ENCODE measurements at regions of chr12 and their contacts with region 1.

Region 1: DNA sequence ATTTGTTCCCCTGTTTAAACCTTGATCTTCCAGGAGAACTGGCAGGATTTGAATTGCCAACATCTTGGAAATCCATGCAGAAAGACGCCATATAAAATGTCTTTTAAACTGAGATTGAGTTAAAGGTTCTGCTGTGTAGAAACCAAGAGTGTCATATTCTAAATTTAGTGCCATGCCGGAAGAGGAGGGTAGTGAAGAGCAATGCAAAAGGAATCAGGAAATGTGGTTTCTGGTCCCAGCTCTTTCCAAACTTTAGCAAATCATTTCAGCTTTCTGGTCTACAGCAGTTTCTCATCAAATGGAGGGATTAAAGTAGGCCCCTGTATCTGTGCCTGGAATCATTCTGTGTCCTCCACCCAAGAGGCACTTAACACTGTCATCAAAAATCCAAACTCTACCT is 85.7 kb downstream of the BTG1 start:
- DNase-seq: no peak
- ATAC-seq: no peak
- H3K4me3 ChIP-seq: no peak overlapping the region
- H3K4me3 Mint-ChIP-seq: peak overlapping the region in 8 of 10 donors; percentile 6 to 79 (median 46)
- H3K27ac ChIP-seq: no peak overlapping the region
- H3K27ac Mint-ChIP-seq: peak overlapping the region in 8 of 9 donors; percentile 19 to 98 (median 93)
- H3K4me1 ChIP-seq: peaks cover 10 to 53% of the 10 kb centered on the region in 2 donors
- H3K4me1 Mint-ChIP-seq: peaks cover 39 to 99% (median 94%) of the 10 kb centered on the region in 7 donors
- H3K27me3 ChIP-seq: no peaks in the 10 kb centered on the region
- H3K27me3 Mint-ChIP-seq: no peaks in the 10 kb centered on the region

Region 2: GRCh38 chr12:91991399-91992187 is 68.4 kb before region 1 on chr12:
- CTCF ChIA-PET with region 1: no interaction called
- POLR2A ChIA-PET with region 1: interaction called, 3 read pairs
- intact Hi-C with region 1: loop called in 1 of 2 experiments (anchors 2 kb)
- DNase-seq: peak in 5 of 9 donors; percentile 22 to 64 (median 48)
- ATAC-seq: peak; percentile 83
- H3K4me3 ChIP-seq: no peak overlapping the region
- H3K4me3 Mint-ChIP-seq: peak overlapping the region in 5 of 10 donors; percentile 18 to 50 (median 32)
- H3K27ac ChIP-seq: peak overlapping the region; percentile 26
- H3K27ac Mint-ChIP-seq: peak overlapping the region in 7 of 9 donors; percentile 8 to 92 (median 70)
- H3K4me1 ChIP-seq: peaks cover 9 to 27% of the 10 kb centered on the region in 2 donors
- H3K4me1 Mint-ChIP-seq: peaks cover 9 to 92% (median 79%) of the 10 kb centered on the region in 7 donors
- H3K27me3 ChIP-seq: no peaks in the 10 kb centered on the region
- H3K27me3 Mint-ChIP-seq: no peaks in the 10 kb centered on the region

Region 3: GRCh38 chr12:92041742-92042141 is 18.2 kb before region 1 on chr12:
- CTCF ChIA-PET with region 1: interaction called, 4 read pairs
- POLR2A ChIA-PET with region 1: interaction called, 128 read pairs
- intact Hi-C with region 1: loop called in 1 of 2 experiments (anchors 1 kb)
- DNase-seq: peak in 7 of 9 donors; percentile 44 to 71 (median 60)
- ATAC-seq: peak; percentile 84
- H3K4me3 ChIP-seq: no peak overlapping the region
- H3K4me3 Mint-ChIP-seq: peak overlapping the region; percentile 41 to 78 (median 62)
- H3K27ac ChIP-seq: peak overlapping the region; percentile 12
- H3K27ac Mint-ChIP-seq: peak overlapping the region; percentile 70 to 99 (median 89)
- H3K4me1 ChIP-seq: peaks cover 20 to 60% of the 10 kb centered on the region in 2 donors
- H3K4me1 Mint-ChIP-seq: peaks cover 41 to 93% (median 88%) of the 10 kb centered on the region in 7 donors
- H3K27me3 ChIP-seq: no peaks in the 10 kb centered on the region
- H3K27me3 Mint-ChIP-seq: no peaks in the 10 kb centered on the region

Region 4: DNA sequence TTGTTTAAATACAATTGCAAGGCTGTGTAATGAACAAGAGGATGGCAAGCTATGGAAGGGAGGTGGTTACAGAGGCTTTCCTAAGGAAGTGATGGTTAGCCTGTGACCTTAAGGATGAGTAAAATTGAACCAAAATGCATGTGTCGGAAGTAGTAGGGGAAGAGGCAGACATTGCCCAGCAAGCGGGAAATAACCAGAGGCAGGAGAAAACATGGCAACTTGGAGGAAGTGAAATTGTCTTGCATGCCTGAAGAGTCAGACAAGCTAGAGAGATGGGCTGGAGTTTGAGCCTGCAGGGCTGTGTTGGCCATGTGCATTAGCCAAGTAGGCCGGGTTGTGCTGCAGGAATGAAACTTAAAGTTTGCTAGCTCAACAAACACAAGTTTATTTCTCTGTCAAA is 10.6 kb before region 1 on chr12:
- CTCF ChIA-PET with region 1: interaction called, 3 read pairs
- POLR2A ChIA-PET with region 1: interaction called, 128 read pairs
- intact Hi-C with region 1: loop called in 1 of 2 experiments (anchors 1 kb)
- DNase-seq: no peak
- ATAC-seq: no peak
- H3K4me3 ChIP-seq: no peak overlapping the region
- H3K4me3 Mint-ChIP-seq: peak overlapping the region in 1 of 10 donors; percentile 34
- H3K27ac ChIP-seq: no peak overlapping the region
- H3K27ac Mint-ChIP-seq: peak overlapping the region in 4 of 9 donors; percentile 14 to 99 (median 74)
- H3K4me1 ChIP-seq: peaks cover 0 to 34% of the 10 kb centered on the region in 2 donors
- H3K4me1 Mint-ChIP-seq: peaks cover 26 to 89% (median 80%) of the 10 kb centered on the region in 7 donors
- H3K27me3 ChIP-seq: no peaks in the 10 kb centered on the region
- H3K27me3 Mint-ChIP-seq: no peaks in the 10 kb centered on the region

Region 5: DNA sequence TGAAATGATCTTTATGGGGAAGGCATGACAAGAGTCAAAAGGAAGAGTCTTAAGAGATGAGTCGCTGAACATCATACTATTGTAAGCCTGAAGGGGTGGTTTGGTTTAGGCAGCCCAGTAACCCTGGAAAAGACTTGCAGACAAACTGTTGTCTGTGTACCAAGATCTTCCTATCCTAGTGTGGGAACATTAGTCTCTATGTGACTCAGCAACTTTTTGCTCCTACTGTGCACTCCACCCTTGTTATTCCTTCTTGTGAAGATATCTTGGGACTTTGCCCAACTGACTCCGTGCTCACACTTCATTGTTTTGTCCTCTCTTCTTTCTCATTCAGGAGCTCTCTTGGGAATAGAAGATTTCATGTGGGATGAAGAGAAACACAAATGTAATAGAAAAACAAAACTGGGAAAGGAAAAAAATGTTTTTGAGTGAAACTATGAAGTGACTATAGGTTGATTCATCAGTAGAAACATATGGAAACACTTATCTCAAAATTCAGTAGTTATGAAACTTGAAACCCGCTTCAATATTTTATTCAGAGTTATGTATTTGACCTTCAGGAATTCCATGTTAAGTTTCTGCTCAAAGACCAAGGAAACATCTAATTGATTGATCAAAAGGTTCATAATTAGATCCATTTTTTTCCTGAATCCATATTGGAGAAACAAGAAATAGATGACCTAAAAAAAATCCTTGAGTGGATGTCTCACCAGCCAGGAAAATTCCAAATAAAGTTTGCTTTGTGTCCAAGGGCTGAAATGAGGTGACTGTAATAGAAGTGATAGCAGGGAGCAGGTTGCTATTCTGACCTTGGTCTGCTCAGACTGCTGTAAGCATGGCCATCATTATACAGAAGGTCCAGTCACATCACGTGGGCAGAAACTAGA is 18.4 kb after region 1 on chr12:
- CTCF ChIA-PET with region 1: no interaction called
- POLR2A ChIA-PET with region 1: interaction called, 7 read pairs
- intact Hi-C with region 1: loop called (anchors 1 kb)
- DNase-seq: no peak
- ATAC-seq: peak; percentile 31
- H3K4me3 ChIP-seq: no peak overlapping the region
- H3K4me3 Mint-ChIP-seq: peak overlapping the region in 7 of 10 donors; percentile 12 to 88 (median 51)
- H3K27ac ChIP-seq: peak overlapping the region; percentile 5
- H3K27ac Mint-ChIP-seq: peak overlapping the region in 8 of 9 donors; percentile 83 to 96 (median 90)
- H3K4me1 ChIP-seq: peaks cover 10 to 45% of the 10 kb centered on the region in 2 donors
- H3K4me1 Mint-ChIP-seq: peaks cover 37 to 87% (median 79%) of the 10 kb centered on the region in 7 donors
- H3K27me3 ChIP-seq: no peaks in the 10 kb centered on the region
- H3K27me3 Mint-ChIP-seq: no peaks in the 10 kb centered on the region

Region 6: GRCh38 chr12:92396647-92397252 is 336.8 kb after region 1 on chr12:
- CTCF ChIA-PET with region 1: no interaction called
- POLR2A ChIA-PET with region 1: interaction called, 4 read pairs
- intact Hi-C with region 1: loop called in 1 of 2 experiments (anchors 2 kb)
- DNase-seq: no peak
- ATAC-seq: no peak
- H3K4me3 ChIP-seq: no peak overlapping the region
- H3K4me3 Mint-ChIP-seq: peak overlapping the region in 8 of 10 donors; percentile 9 to 76 (median 62)
- H3K27ac ChIP-seq: peak overlapping the region; percentile 85
- H3K27ac Mint-ChIP-seq: peak overlapping the region; percentile 90 to 100 (median 98)
- H3K4me1 ChIP-seq: peaks cover 76 to 84% of the 10 kb centered on the region in 2 donors
- H3K4me1 Mint-ChIP-seq: peaks cover 56 to 100% (median 93%) of the 10 kb centered on the region in 7 donors
- H3K27me3 ChIP-seq: no peaks in the 10 kb centered on the region
- H3K27me3 Mint-ChIP-seq: no peaks in the 10 kb centered on the region

Region 7: DNA sequence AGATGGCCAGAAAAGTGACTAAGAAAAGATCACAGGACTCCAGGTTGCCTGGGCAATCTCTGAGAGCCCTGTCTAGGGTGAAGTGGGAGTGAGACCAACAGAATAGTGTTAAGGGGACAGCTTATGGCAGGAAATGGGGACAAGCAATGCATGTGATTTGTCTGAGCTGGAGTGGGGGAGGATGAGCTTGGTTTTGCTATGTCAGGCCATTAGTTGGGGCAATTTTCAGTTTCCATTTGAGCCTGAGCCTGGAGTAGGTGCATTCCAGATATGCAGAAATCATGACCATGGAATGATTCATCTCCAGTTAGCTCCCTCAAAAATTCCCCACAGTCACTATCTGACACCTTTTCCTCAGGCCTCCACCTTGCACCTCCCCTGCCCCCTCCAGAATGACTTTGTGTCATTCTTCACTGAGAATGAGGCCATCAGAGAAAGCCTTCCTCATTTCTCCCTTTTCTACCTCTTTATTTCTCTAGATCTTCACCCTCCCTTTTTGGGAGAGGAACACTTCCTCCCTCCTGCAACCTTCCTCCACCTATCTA is 491.9 kb after region 1 on chr12:
- CTCF ChIA-PET with region 1: no interaction called
- POLR2A ChIA-PET with region 1: no interaction called
- intact Hi-C with region 1: loop called in 1 of 2 experiments (anchors 10 kb)
- DNase-seq: peak in 1 of 9 donors; percentile 51
- ATAC-seq: no peak
- H3K4me3 ChIP-seq: no peak overlapping the region
- H3K4me3 Mint-ChIP-seq: no peak overlapping the region
- H3K27ac ChIP-seq: no peak overlapping the region
- H3K27ac Mint-ChIP-seq: no peak overlapping the region
- H3K4me1 ChIP-seq: peaks cover 11 to 15% of the 10 kb centered on the region in 2 donors
- H3K4me1 Mint-ChIP-seq: peaks cover 21 to 32% (median 27%) of the 10 kb centered on the region in 7 donors
- H3K27me3 ChIP-seq: no peaks in the 10 kb centered on the region
- H3K27me3 Mint-ChIP-seq: no peaks in the 10 kb centered on the region

Measured in naive thymus-derived CD4-positive, alpha-beta T cell (primary cell).